Activated T-helper 1 cell treated with anti-CD3 and anti-CD28 coated beads, Interleukin-12 subunit alpha, Interleukin-12 subunit beta, Interleukin-2, Interleukin-4 antibody, amounts not matched to agents 30 ng/mL and 10 ng/mL and 1 ng/mL, durations not matched to agents 14 hours and 24 hours and 36 hours (primary cell): ENCODE measurements at regions of chr1 and their contacts with region 1.

Region 1: GRCh38 chr1:76294482-76295194 is 220.1 kb downstream of the ST6GALNAC3 start:
- DNase-seq: no peak
- H3K4me3 Mint-ChIP-seq: peak overlapping the region; percentile 56
- H3K27ac Mint-ChIP-seq: peak overlapping the region; percentile 83
- H3K4me1 Mint-ChIP-seq: peaks cover 60% of the 10 kb centered on the region
- H3K27me3 Mint-ChIP-seq: no peaks in the 10 kb centered on the region

Region 2: DNA sequence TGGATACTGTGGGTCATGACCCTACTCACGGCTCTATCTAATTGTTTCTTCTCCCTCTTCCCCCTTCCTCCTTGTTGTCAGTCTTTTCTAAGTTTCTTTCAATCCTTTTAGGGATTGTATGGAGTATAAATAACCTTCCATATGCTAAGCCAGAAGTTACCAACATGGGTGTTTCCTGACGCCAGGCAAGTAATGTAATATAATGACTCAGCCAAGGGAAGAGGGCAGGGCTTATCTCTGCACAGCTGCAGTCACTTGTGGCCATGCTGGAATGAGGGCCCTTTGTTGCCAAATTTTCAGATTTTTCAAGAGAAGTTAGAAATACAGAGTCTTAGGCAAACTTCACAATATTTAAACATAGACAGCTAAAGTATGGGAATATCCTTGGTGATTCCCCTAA is 25.5 kb before region 1 on chr1:
- intact Hi-C with region 1: loop called (anchors 1 kb)
- DNase-seq: no peak
- H3K4me3 Mint-ChIP-seq: peak overlapping the region; percentile 48
- H3K27ac Mint-ChIP-seq: peak overlapping the region; percentile 77
- H3K4me1 Mint-ChIP-seq: peaks cover 71% of the 10 kb centered on the region
- H3K27me3 Mint-ChIP-seq: no peaks in the 10 kb centered on the region

Region 3: GRCh38 chr1:76494807-76495206 is 200.2 kb after region 1 on chr1:
- intact Hi-C with region 1: loop called (anchors 10 kb)
- DNase-seq: peak; percentile 1
- H3K4me3 Mint-ChIP-seq: peak overlapping the region; percentile 20
- H3K27ac Mint-ChIP-seq: peak overlapping the region; percentile 60
- H3K4me1 Mint-ChIP-seq: peaks cover 35% of the 10 kb centered on the region
- H3K27me3 Mint-ChIP-seq: peaks cover 1% of the 10 kb centered on the region